Activated T-helper 2 cell treated with anti-CD3 and anti-CD28 coated beads, Interferon-gamma antibody, Interleukin-2, Interleukin-4, amounts not matched to agents 10 μg/mL and 5 μg/mL and 100 μg/mL, durations not matched to agents 14 hours and 24 hours and 36 hours (primary cell): ENCODE measurements at regions of chr3 and their contacts with region 1.

Region 1: GRCh38 chr3:134600685-134601463 is 49.9 kb downstream of the KY start:
- DNase-seq: peak; percentile 43
- H3K4me3 Mint-ChIP-seq: no peak overlapping the region
- H3K27ac Mint-ChIP-seq: no peak overlapping the region
- H3K4me1 Mint-ChIP-seq: peaks cover 4% of the 10 kb centered on the region
- H3K27me3 Mint-ChIP-seq: no peaks in the 10 kb centered on the region

Region 2: DNA sequence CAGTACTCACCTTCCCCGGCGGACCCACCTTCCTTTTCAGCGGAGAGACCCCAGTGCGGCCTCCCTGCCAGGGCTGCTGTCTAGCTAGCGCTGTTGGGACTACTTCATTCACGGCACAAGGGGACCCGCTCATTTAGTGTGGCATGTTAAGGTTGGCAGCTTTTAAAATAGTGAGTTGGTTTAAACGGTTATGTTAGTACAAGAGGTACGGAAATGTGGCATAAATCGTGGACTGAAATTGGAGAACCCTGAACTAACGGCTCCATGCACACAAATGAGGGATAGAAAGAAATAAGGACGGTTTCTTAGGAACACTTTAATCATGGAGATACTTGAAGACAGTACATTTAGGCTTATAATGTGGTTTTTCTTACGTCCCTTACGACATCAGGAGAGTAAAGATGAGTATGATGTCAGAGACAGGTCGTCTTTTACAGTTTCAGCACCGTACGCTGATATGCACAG is 114.3 kb before region 1 on chr3:
- intact Hi-C with region 1: no loop called
- DNase-seq: no peak
- H3K4me3 Mint-ChIP-seq: peak overlapping the region; percentile 97
- H3K27ac Mint-ChIP-seq: peak overlapping the region; percentile 99
- H3K4me1 Mint-ChIP-seq: peaks cover 37% of the 10 kb centered on the region
- H3K27me3 Mint-ChIP-seq: no peaks in the 10 kb centered on the region

Region 3: DNA sequence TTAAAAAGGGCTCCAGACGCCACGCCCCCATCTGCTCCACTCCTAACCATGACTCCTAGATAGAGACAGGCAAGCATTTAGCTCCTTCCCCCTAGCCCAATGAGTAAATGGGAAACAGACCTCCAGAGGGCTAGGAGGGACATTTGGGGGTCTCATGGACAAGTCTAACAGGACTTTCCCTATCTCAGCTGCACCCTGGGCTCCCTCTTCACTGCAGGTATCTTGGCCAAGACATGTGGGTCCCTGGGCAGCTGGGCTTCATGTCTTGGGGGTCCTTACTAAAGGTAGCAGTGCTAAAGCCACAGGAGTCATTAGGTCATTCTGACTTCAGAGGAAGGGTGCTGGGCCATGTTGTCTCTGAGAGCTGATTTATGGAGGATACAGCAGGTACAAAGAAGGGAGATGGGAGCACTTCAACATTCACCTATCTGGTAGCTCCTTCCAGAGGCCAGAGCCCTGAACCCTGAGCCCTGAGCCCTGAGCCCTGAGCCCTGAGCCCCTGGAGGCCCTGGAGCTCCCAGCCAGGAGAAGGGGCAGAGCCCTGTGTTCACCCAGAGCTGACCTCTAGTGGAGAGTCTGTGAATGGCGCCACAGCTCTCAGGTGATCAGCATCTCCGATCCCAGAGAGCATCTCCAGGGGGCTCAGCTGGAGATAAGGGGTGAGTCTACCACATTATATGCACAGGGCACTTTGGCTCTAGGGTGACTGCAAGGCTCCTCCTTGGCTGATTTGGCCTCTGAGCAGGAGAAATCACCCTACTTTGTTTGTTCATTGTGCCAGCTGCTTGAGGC is 154.1 kb after region 1 on chr3:
- intact Hi-C with region 1: loop called (anchors 5 kb)
- DNase-seq: peak; percentile 10
- H3K4me3 Mint-ChIP-seq: no peak overlapping the region
- H3K27ac Mint-ChIP-seq: no peak overlapping the region
- H3K4me1 Mint-ChIP-seq: no peaks in the 10 kb centered on the region
- H3K27me3 Mint-ChIP-seq: no peaks in the 10 kb centered on the region